OCI-LY7 (cell line): ENCODE measurements at regions of chr1 and their contacts with region 1.

Region 1: GRCh38 chr1:234772345-234773147 is 162.6 kb upstream of the IRF2BP2 start:
- DNase-seq: peak; percentile 88
- H3K4me3 ChIP-seq: peak overlapping the region; percentile 39
- H3K27ac ChIP-seq: peak overlapping the region; percentile 66
- H3K4me1 ChIP-seq: peaks cover 33% of the 10 kb centered on the region
- CTCF ChIP-seq: no peak

Region 2: DNA sequence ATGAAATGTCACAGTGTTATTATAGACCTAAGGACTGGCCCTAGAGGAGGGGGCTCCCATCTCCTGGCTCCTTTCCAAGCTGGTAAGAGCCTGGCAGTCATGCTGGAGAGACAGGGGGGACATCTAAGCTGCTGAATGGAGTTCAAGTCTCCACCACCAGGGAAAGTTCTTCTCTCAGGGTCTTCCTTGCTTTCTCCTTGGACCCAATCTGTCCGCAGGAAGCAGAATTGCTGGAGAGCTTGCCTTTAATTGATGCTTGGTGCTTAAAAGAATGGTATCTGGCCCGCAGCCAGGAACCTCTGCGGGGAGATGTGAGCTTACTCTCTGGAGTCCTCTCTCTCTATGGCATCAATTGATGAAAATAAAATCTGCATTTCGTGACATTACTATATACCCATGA is 187.6 kb before region 1 on chr1:
- CTCF ChIA-PET with region 1: no interaction called
- POLR2A ChIA-PET with region 1: no interaction called
- intact Hi-C with region 1: no loop called
- DNase-seq: no peak
- H3K4me3 ChIP-seq: no peak overlapping the region
- H3K27ac ChIP-seq: no peak overlapping the region
- H3K4me1 ChIP-seq: no peaks in the 10 kb centered on the region
- CTCF ChIP-seq: no peak

Region 3: DNA sequence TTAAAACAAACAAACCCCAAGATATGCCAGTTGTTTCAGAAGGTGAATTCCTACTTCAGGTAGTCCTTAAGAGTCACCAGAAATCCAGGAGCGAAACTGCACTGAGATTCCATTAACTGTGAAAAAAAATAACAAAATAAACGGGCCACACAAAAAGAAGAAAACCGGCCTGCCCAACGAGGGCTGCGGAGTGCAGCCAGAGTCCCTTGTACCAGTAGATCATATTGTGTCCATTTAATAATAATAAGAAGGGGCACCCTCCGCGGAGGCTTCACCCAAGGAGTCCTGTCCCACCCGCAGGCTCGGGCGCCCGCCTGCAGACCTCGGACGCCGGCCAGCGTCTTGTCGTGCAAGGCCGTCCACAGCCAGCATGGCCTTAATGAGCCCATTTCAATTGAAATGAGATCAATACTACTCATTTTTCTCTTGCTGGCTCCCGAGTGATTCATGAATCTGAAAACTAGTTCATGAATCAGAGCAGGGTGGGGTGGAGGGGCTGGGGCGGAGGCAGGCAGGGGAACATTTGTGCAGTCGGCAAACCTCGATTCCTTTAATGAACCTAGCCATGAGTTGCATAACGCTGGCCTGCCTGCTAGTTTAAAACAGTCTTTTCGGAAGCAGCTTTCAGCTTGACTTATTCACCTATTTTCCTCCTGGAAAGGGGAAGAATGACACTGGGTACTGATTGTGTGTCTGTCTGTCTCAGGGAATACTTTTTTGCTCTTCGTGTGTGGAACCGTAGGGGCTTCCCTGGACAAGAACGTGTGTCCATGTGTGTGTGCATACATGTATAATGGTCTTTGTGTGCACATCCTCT is 49.4 kb before region 1 on chr1:
- CTCF ChIA-PET with region 1: interaction called, 3 read pairs
- POLR2A ChIA-PET with region 1: interaction called, 4 read pairs
- intact Hi-C with region 1: loop called (anchors 2 kb)
- DNase-seq: peak; percentile 10
- H3K4me3 ChIP-seq: peak overlapping the region; percentile 27
- H3K27ac ChIP-seq: peak overlapping the region; percentile 65
- H3K4me1 ChIP-seq: peaks cover 50% of the 10 kb centered on the region
- CTCF ChIP-seq: no peak

Region 4: DNA sequence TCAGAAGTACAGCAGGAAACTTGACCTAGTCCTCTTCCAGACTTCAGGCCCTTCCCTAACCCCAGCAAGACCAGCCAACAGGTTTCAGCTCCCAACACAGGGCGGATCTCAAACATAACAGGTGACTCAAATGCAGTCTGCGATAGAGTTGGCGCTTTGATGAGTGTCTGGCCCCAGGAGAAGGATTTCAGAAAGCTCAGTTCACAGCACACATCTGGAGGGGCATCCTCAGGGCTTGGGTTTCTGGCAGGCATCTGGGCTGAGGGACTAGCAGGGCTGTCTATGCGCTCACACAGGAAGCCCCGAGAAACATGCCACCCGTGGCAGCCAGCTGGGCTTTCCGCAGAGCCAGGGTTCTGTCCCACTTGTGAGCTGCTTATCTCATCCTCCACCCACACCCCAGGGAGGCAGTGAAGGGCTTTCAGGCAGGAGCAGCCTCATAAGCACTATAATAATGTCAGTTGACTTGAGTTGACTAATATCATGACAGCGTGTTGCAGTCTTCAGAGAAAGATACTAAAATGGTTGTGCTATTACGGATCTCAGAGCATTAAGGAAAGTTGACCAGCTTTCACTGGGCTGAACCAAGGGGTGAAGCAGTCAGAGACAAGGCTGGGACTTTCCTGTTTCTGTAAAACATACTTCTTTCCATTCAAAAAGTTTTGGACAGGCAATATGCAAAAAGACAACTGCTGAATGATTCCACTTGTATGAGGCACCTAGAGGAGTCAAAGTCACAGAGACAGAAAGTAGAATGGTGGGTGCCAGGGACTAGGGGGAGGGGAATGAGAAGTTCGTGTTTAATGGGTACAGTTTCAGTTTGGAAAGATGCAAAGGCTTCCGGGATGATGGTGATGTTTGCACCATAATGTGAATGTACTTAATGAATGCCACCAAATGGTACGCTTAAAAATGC is 70.4 kb after region 1 on chr1:
- CTCF ChIA-PET with region 1: no interaction called
- POLR2A ChIA-PET with region 1: interaction called, 8 read pairs
- intact Hi-C with region 1: loop called (anchors 2 kb)
- DNase-seq: peak; percentile 66
- H3K4me3 ChIP-seq: peak overlapping the region; percentile 18
- H3K27ac ChIP-seq: peak overlapping the region; percentile 52
- H3K4me1 ChIP-seq: peaks cover 62% of the 10 kb centered on the region
- CTCF ChIP-seq: 0 out of 2 replicates have a peak, but pooled peaks have one; percentile 21